Activated CD4-positive, alpha-beta memory T cell treated with anti-CD3 and anti-CD28 coated beads for 36 hours (primary cell): ENCODE measurements at regions of chr2 and their contacts with region 1.

Region 1: DNA sequence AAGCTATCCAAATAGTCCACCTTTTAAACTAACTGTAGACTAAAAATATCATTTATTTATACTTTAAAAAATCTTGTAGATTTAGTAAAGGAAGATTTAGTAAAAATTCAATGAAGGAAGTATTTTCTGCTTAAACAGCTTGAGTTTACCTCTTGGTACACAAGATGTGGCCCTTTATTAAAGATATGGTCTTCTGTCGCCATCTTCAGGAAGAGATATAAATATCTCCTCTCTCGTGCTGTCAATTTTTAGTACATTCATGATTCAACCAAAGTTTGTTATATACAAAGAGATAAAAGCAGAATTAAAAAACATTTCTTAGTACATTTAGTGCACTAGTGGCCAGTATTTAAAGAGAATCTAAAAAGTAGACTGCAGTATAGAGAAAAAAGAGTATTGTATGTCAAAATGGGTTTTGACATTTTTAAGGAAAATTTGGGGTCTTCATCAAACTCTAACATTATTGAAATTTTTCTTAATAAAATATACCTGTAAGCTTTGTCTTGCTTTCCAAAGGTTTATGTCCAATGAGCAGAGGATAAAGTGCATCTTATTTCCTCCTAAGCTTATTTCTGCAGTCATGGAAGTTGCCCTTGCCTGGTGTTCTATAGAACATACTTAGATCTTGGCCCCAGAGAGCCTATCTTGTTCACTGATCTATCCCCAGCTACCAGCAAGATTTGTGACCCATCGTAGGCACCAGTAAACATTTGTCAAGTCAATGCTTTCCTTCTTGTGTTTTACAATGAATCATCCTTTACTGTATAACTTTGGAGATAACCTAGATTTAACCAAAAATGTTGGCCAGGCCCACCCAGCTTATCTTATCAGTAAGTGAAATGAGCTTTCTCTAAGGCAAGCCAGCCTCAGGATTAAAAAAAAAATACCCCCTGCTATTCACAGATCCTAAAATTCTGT is 18.5 kb upstream of the EML6 start:
- DNase-seq: no peak
- H3K4me3 Mint-ChIP-seq: no peak overlapping the region
- H3K27ac Mint-ChIP-seq: no peak overlapping the region
- H3K4me1 Mint-ChIP-seq: peaks cover 6% of the 10 kb centered on the region
- H3K27me3 Mint-ChIP-seq: peaks cover 19% of the 10 kb centered on the region

Region 2: GRCh38 chr2:54106631-54107454 is 598.1 kb before region 1 on chr2:
- CTCF ChIA-PET with region 1: interaction called, 31 read pairs
- POLR2A ChIA-PET with region 1: interaction called, 3 read pairs
- intact Hi-C with region 1: loop called (anchors 2 kb)
- DNase-seq: peak; percentile 58
- H3K4me3 Mint-ChIP-seq: no peak overlapping the region
- H3K27ac Mint-ChIP-seq: no peak overlapping the region
- H3K4me1 Mint-ChIP-seq: peaks cover 5% of the 10 kb centered on the region
- H3K27me3 Mint-ChIP-seq: no peaks in the 10 kb centered on the region

Region 3: GRCh38 chr2:54657664-54658083 is 47.3 kb before region 1 on chr2:
- CTCF ChIA-PET with region 1: interaction called, 228 read pairs
- POLR2A ChIA-PET with region 1: no interaction called
- intact Hi-C with region 1: loop called (anchors 1 kb)
- DNase-seq: peak; percentile 55
- H3K4me3 Mint-ChIP-seq: no peak overlapping the region
- H3K27ac Mint-ChIP-seq: peak overlapping the region; percentile 57
- H3K4me1 Mint-ChIP-seq: peaks cover 18% of the 10 kb centered on the region
- H3K27me3 Mint-ChIP-seq: no peaks in the 10 kb centered on the region

Region 4: GRCh38 chr2:54680397-54681041 is 24.4 kb before region 1 on chr2:
- CTCF ChIA-PET with region 1: interaction called, 36 read pairs
- POLR2A ChIA-PET with region 1: no interaction called
- intact Hi-C with region 1: no loop called
- DNase-seq: peak; percentile 65
- H3K4me3 Mint-ChIP-seq: peak overlapping the region; percentile 47
- H3K27ac Mint-ChIP-seq: no peak overlapping the region
- H3K4me1 Mint-ChIP-seq: peaks cover 21% of the 10 kb centered on the region
- H3K27me3 Mint-ChIP-seq: peaks cover 68% of the 10 kb centered on the region

Region 5: GRCh38 chr2:54791831-54792230 is 86.9 kb after region 1 on chr2:
- CTCF ChIA-PET with region 1: no interaction called
- POLR2A ChIA-PET with region 1: no interaction called
- intact Hi-C with region 1: no loop called
- DNase-seq: no peak
- H3K4me3 Mint-ChIP-seq: no peak overlapping the region
- H3K27ac Mint-ChIP-seq: no peak overlapping the region
- H3K4me1 Mint-ChIP-seq: no peaks in the 10 kb centered on the region
- H3K27me3 Mint-ChIP-seq: peaks cover under 1% of the 10 kb centered on the region

Region 6: DNA sequence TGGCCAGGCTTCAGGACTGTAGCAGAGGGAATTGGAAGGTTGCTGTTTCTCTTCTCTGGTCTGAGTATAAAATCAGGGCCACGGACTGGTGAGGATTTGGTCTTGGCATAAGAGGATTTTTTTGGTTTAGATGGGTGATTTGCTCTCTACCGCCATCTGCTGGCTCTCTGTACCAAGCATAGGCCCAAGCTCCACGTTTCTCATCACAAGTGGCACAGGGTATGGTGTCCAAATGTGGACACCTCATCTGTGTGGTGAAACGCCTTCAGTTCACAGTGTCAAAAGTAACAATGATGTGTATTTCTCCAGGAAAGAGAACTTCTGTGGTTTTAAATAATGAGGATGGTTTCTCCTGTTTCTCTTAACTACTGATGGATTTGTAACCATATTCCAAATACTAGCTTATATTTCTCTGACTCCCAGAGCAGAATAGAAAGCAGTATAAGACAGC is 133.7 kb after region 1 on chr2:
- CTCF ChIA-PET with region 1: interaction called, 15 read pairs
- POLR2A ChIA-PET with region 1: no interaction called
- intact Hi-C with region 1: no loop called
- DNase-seq: peak; percentile 73
- H3K4me3 Mint-ChIP-seq: no peak overlapping the region
- H3K27ac Mint-ChIP-seq: no peak overlapping the region
- H3K4me1 Mint-ChIP-seq: no peaks in the 10 kb centered on the region
- H3K27me3 Mint-ChIP-seq: no peaks in the 10 kb centered on the region